AG04450 (cell line): ENCODE measurements at regions of chr10 and their contacts with region 1.

Region 1: GRCh38 chr10:4813023-4813422 is 13.0 kb upstream of the AKR1E2 start:
- DNase-seq: peak; percentile 82
- H3K4me3 ChIP-seq: no peak overlapping the region
- H3K27ac ChIP-seq: peak overlapping the region; percentile 70
- H3K27me3 ChIP-seq: no peaks in the 10 kb centered on the region
- CTCF ChIP-seq: no peak

Region 2: GRCh38 chr10:4719036-4719435 is 94.0 kb before region 1 on chr10:
- CTCF ChIA-PET with region 1: no interaction called
- POLR2A ChIA-PET with region 1: no interaction called
- DNase-seq: no peak
- H3K4me3 ChIP-seq: no peak overlapping the region
- H3K27ac ChIP-seq: no peak overlapping the region
- H3K27me3 ChIP-seq: no peaks in the 10 kb centered on the region
- CTCF ChIP-seq: no peak

Region 3: GRCh38 chr10:4825851-4826665 is 13.0 kb after region 1 on chr10 and contains the start of gene AKR1E2:
- CTCF ChIA-PET with region 1: interaction called, 32 read pairs
- POLR2A ChIA-PET with region 1: no interaction called
- DNase-seq: peak; percentile 51
- H3K4me3 ChIP-seq: peak within 1 kb of the TSS; percentile 58
- H3K27ac ChIP-seq: peak within 1 kb of the TSS; percentile 57
- H3K27me3 ChIP-seq: no peaks in the 10 kb centered on the region
- CTCF ChIP-seq: no peak
- polyA plus RNA-seq, gene AKR1E2: 1.3 and 1.4 TPM in 2 replicates

Region 4: DNA sequence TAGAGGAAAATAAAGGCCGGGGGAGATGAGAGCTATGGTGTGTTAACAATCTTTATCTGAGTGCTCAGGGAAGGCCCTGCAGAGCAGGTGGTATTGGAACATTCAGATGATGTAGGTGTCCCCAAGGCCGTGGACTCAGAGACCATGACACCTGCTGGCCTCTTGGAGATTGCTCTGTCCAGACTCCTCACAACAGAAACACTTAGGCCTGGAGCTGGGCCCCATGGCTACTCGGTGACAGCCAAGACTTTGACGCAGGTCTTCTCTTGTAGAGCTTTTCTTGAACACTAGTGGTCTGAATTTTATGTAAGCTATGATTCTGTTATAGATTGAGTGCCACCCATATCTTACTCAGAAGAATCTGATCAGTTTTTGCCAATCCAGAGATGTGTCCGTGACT is 26.4 kb after region 1 on chr10:
- CTCF ChIA-PET with region 1: interaction called, 10 read pairs
- POLR2A ChIA-PET with region 1: no interaction called
- DNase-seq: no peak
- H3K4me3 ChIP-seq: no peak overlapping the region
- H3K27ac ChIP-seq: no peak overlapping the region
- H3K27me3 ChIP-seq: no peaks in the 10 kb centered on the region
- CTCF ChIP-seq: no peak

Region 5: DNA sequence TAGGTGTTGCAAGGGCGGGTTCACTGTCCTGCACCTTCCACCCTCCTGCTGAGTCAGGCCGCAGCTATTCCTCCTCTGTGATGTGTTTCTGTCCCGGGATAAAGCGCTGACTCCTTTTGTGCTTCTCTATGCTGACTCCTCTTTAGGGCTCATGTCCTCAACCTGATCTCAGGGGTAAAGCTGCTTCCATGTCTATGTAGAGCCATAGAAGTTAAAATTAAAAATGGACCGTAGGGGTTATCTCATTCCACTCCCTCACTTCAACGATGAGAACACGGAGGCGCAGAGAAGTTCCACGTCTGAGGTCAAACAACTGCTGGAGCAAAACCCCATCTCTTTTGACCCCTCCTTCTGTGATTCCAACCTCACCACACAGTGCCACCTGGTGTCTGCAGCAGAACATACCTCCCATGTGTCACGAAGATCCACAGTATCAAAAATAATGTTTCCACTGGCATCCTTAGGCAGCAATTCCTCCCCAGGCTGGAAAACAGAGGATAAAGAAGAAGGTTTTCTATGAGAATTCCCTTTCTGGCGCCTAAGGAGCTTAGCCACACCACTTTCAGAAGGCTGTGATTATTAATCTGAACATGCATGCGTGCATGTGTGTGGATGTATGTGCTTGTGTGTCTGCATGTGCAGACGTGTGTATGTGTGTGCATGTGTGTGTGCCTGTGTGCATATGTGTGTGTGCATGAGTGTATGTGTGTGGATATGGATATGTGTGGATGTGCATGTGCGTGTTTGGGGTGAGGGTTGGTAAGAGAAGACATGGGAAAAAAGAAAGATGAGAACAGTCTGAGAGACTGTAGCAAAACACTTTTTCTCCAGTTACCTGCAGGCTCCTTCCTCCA is 470.5 kb after region 1 on chr10:
- CTCF ChIA-PET with region 1: interaction called, 24 read pairs
- POLR2A ChIA-PET with region 1: no interaction called
- DNase-seq: peak; percentile 27
- H3K4me3 ChIP-seq: no peak overlapping the region
- H3K27ac ChIP-seq: no peak overlapping the region
- H3K27me3 ChIP-seq: peaks cover 2% of the 10 kb centered on the region
- CTCF ChIP-seq: peak; percentile 63

Region 6: GRCh38 chr10:5385224-5385623 is 572.2 kb after region 1 on chr10:
- CTCF ChIA-PET with region 1: interaction called, 16 read pairs
- POLR2A ChIA-PET with region 1: no interaction called
- DNase-seq: no peak
- H3K4me3 ChIP-seq: no peak overlapping the region
- H3K27ac ChIP-seq: no peak overlapping the region
- H3K27me3 ChIP-seq: peaks cover 7% of the 10 kb centered on the region
- CTCF ChIP-seq: no peak

Region 7: GRCh38 chr10:5423771-5424170 is 610.7 kb after region 1 on chr10:
- CTCF ChIA-PET with region 1: interaction called, 39 read pairs
- POLR2A ChIA-PET with region 1: interaction called, 3 read pairs
- DNase-seq: no peak
- H3K4me3 ChIP-seq: no peak overlapping the region
- H3K27ac ChIP-seq: no peak overlapping the region
- H3K27me3 ChIP-seq: no peaks in the 10 kb centered on the region
- CTCF ChIP-seq: no peak

Region 8: GRCh38 chr10:5434017-5434753 is 621.2 kb after region 1 on chr10:
- CTCF ChIA-PET with region 1: interaction called, 168 read pairs
- POLR2A ChIA-PET with region 1: no interaction called
- DNase-seq: no peak
- H3K4me3 ChIP-seq: no peak overlapping the region
- H3K27ac ChIP-seq: peak overlapping the region; percentile 48
- H3K27me3 ChIP-seq: no peaks in the 10 kb centered on the region
- CTCF ChIP-seq: peak; percentile 77